PC-3 (cell line): ENCODE measurements at regions of chr3 and their contacts with region 1.

Region 1: GRCh38 chr3:169149349-169149890 is 514.1 kb downstream of the MECOM start:
- DNase-seq: peak; percentile 92
- ATAC-seq: peak; percentile 76
- H3K4me3 ChIP-seq: peak overlapping the region; percentile 73
- H3K27ac ChIP-seq: peak overlapping the region; percentile 12
- H3K4me1 ChIP-seq: peaks cover 33% of the 10 kb centered on the region
- H3K27me3 ChIP-seq: no peaks in the 10 kb centered on the region
- CTCF ChIP-seq: peak; percentile 87

Region 2: DNA sequence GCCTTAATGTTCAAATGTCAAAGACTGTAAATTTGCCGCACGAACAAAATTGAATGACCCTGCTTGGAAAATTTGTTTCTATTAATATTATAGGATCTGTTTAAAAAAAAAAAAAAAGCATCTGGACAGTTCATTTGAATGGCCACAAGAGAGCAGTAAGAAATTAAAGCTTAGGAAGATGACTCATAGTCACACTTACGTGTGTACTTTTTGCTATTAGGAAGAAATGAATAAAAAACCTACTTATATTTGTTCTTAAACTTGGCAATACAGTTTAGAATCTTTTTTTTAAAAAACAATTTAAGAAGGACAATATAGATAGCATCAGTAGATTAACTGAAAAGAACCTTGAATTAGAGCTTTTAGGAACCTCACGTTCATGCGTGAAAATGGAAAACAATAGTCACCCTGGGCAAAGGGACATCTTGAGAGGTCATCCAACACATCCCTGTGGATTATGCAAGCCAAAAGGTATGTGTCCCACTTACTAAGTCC is 107.7 kb before region 1 on chr3:
- CTCF ChIA-PET with region 1: interaction called, 4 read pairs
- POLR2A ChIA-PET with region 1: no interaction called
- intact Hi-C with region 1: loop called (anchors 5 kb)
- DNase-seq: peak; percentile 64
- ATAC-seq: 0 out of 2 replicates have a peak, but pooled peaks have one; percentile 9
- H3K4me3 ChIP-seq: peak overlapping the region; percentile 24; the same call in 1 of the 2 replicates
- H3K27ac ChIP-seq: no peak overlapping the region
- H3K4me1 ChIP-seq: peaks cover 33% of the 10 kb centered on the region
- H3K27me3 ChIP-seq: no peaks in the 10 kb centered on the region
- CTCF ChIP-seq: peak; percentile 81

Region 3: DNA sequence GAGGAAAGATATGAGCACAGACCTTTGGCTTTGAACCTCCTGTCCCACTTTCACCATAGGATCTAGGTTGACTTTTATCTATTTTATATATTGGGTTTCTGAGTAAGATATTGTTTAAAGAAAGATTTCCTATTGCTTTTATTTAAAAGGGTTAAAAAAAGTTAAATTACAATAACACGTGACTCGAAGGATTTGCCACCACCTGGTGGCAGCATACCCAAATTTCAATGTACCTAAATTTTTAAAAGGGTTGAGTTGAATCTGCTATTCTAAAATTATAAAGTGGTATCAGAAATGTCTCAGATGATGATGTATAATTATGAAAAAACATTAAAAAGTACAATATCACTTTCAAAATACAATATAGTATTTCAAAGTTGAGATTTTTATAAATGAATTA is 145.7 kb after region 1 on chr3:
- CTCF ChIA-PET with region 1: interaction called, 8 read pairs
- POLR2A ChIA-PET with region 1: no interaction called
- intact Hi-C with region 1: loop called (anchors 2 kb)
- DNase-seq: peak; percentile 52
- ATAC-seq: no peak
- H3K4me3 ChIP-seq: no peak overlapping the region
- H3K27ac ChIP-seq: no peak overlapping the region
- H3K4me1 ChIP-seq: peaks cover 7% of the 10 kb centered on the region; the same call in 1 of the 2 replicates
- H3K27me3 ChIP-seq: no peaks in the 10 kb centered on the region
- CTCF ChIP-seq: peak; percentile 71

Region 4: GRCh38 chr3:169390271-169391230 is 241.1 kb after region 1 on chr3:
- CTCF ChIA-PET with region 1: interaction called, 8 read pairs
- POLR2A ChIA-PET with region 1: no interaction called
- intact Hi-C with region 1: loop called (anchors 1 kb)
- DNase-seq: peak; percentile 57
- ATAC-seq: peak; percentile 87
- H3K4me3 ChIP-seq: no peak overlapping the region
- H3K27ac ChIP-seq: no peak overlapping the region
- H3K4me1 ChIP-seq: 0 out of 2 replicates have a peak, but pooled peaks cover 11% of the 10 kb centered on the region
- H3K27me3 ChIP-seq: no peaks in the 10 kb centered on the region
- CTCF ChIP-seq: peak; percentile 59

Region 5: DNA sequence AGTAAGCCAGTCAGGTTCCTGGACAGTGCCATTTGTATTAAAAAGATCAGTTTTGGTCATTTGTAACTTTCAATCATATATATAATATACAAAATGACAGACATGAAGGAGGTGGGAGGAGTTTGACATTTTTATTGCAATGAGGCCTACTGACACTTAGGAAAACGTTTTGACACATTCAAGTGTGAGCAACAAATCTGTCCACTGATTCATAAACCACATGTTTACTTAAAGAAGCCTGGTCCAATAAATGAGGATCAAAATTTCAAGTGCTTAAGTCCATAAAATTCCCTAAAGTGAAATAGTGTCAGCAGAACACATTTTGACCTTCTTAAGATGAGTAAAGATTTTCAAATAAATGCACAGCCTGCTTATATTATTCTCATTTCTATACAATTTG is 376.8 kb after region 1 on chr3:
- CTCF ChIA-PET with region 1: interaction called, 4 read pairs
- POLR2A ChIA-PET with region 1: no interaction called
- intact Hi-C with region 1: loop called (anchors 5 kb)
- DNase-seq: peak; percentile 48
- ATAC-seq: peak; percentile 55
- H3K4me3 ChIP-seq: no peak overlapping the region
- H3K27ac ChIP-seq: no peak overlapping the region
- H3K4me1 ChIP-seq: peaks cover 33% of the 10 kb centered on the region
- H3K27me3 ChIP-seq: no peaks in the 10 kb centered on the region
- CTCF ChIP-seq: no peak

Region 6: DNA sequence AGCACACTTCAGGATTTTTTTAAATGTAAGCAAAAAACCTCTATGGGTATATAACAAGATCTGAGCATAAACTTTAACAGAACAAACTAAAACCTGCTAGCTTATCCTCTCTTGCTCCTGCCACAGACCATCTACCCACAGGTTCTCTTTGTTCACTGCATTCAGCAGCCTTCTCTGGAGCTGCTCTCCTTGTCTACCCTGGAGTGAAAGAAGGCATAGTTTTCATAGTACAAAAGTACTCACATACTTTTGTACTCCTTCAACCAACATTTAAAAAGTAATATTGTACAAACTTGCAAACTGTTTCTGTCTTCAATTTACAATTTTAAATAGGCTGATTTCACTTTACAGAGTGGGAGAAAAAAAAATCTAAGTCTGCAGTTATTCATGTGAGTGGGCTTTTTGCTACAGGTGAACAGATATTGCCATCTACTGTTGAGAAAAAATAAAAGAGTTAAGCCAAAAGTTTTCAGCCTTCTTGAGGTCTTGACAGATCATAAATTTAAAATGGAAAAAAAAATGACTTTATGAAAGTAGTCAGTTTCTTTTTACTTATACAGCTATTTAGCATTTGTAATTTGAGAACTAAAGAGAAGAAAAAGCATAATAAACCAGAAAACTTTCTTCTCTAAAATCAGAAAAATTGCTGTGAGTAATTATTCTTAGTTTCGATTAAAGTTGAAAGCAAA is 595.1 kb after region 1 on chr3:
- CTCF ChIA-PET with region 1: interaction called, 6 read pairs
- POLR2A ChIA-PET with region 1: no interaction called
- intact Hi-C with region 1: loop called (anchors 5 kb)
- DNase-seq: peak; percentile 66
- ATAC-seq: 0 out of 2 replicates have a peak, but pooled peaks have one; percentile 39
- H3K4me3 ChIP-seq: no peak overlapping the region
- H3K27ac ChIP-seq: no peak overlapping the region
- H3K4me1 ChIP-seq: peaks cover 20% of the 10 kb centered on the region
- H3K27me3 ChIP-seq: no peaks in the 10 kb centered on the region
- CTCF ChIP-seq: peak; percentile 83